Activated CD4-positive, alpha-beta memory T cell treated with anti-CD3 and anti-CD28 coated beads, Interleukin-2, amount 10 ng/mL, durations not matched to agents 7 days and 5 days (primary cell): ENCODE measurements at regions of chr5 and their contacts with region 1.

Region 1: DNA sequence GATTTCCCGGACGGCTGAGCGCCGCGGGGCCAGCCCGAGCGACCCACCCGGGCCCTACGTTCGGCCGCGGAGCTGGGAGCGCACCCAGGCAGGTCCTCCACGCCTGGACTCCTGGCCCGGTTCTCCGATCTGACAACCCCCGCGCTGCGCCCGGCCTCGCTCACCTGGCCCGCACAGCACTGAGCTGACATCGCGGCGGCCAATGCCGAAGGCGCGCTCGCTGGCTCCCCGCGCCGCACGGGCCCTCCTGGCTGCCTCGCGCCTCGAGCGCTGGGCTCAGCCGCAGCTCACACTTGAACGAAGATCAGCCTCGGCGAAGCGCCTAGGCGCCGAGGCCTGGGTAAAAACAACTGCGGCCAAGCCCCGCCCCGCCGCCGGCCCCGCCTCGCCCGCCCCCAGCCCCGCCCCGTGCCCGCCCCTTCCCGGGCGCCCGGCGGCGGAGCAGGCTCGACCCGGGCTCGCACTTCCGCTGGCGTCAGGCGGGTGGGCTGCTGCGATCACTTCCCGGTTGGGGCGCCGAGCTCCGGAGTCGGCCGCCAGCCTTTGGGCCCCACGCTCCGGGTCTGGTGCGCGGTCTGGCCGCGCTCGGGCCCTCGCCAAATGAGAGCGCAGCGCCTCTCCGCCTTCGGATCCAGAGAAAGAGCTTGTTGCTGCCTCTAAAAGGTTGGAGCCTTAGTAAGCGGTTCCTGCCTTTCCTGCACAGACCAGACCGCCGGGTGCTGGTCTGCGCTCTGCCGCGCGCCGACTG is at the start of gene SERINC5:
- DNase-seq: peak; percentile 86
- H3K4me3 Mint-ChIP-seq: peak within 1 kb of the TSS; percentile 93
- H3K27ac Mint-ChIP-seq: peak within 1 kb of the TSS; percentile 91
- H3K4me1 Mint-ChIP-seq: peaks cover 45% of the 10 kb centered on the region
- H3K27me3 Mint-ChIP-seq: no peaks in the 10 kb centered on the region
- total RNA-seq, gene SERINC5: 59.1 to 60.6 TPM

Region 2: GRCh38 chr5:80041527-80041926 is 214.4 kb before region 1 on chr5:
- CTCF ChIA-PET with region 1: no interaction called
- POLR2A ChIA-PET with region 1: no interaction called
- DNase-seq: no peak
- H3K4me3 Mint-ChIP-seq: no peak overlapping the region
- H3K27ac Mint-ChIP-seq: no peak overlapping the region
- H3K4me1 Mint-ChIP-seq: peaks cover 12% of the 10 kb centered on the region
- H3K27me3 Mint-ChIP-seq: peaks cover 32% of the 10 kb centered on the region

Region 3: GRCh38 chr5:80083101-80083890 is 172.6 kb before region 1 on chr5:
- CTCF ChIA-PET with region 1: interaction called, 3 read pairs
- POLR2A ChIA-PET with region 1: interaction called, 10 read pairs
- DNase-seq: peak; percentile 31
- H3K4me3 Mint-ChIP-seq: peak overlapping the region; percentile 56
- H3K27ac Mint-ChIP-seq: peak overlapping the region; percentile 64
- H3K4me1 Mint-ChIP-seq: peaks cover 16% of the 10 kb centered on the region
- H3K27me3 Mint-ChIP-seq: no peaks in the 10 kb centered on the region

Region 4: GRCh38 chr5:80134879-80135278 is 121.0 kb before region 1 on chr5:
- CTCF ChIA-PET with region 1: interaction called, 7 read pairs
- POLR2A ChIA-PET with region 1: interaction called, 52 read pairs
- DNase-seq: no peak
- H3K4me3 Mint-ChIP-seq: no peak overlapping the region
- H3K27ac Mint-ChIP-seq: peak overlapping the region; percentile 95
- H3K4me1 Mint-ChIP-seq: peaks cover 62% of the 10 kb centered on the region
- H3K27me3 Mint-ChIP-seq: no peaks in the 10 kb centered on the region

Region 5: DNA sequence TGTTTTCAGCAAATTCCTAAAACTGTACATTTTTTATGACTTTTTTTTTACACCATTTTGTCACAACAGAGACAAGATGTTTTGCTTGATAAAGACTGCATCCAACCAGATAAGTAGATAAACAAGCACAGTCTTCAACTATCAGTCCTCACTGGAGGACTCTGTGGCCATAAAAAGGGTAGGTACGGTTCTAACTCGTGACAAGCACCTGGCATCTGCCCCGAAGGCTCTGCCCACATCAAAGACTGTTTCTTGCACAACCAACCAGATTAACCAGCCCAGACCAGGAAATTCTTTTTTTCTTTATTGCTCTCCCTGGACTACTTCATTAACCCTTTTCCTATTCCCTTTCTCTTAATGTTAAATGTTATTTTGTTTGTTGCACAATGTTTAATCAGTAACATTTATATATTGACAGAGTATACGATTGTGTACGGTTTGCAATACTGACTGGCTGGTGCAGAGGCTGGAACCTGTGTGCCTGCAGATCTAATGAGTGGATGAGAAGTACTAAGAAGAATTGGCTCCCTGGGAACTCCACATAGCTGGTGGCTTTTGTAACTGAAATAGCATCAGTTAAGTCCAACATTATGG is 74.2 kb before region 1 on chr5:
- CTCF ChIA-PET with region 1: interaction called, 11 read pairs
- POLR2A ChIA-PET with region 1: interaction called, 397 read pairs
- DNase-seq: peak; percentile 62
- H3K4me3 Mint-ChIP-seq: peak overlapping the region; percentile 40
- H3K27ac Mint-ChIP-seq: peak overlapping the region; percentile 89
- H3K4me1 Mint-ChIP-seq: peaks cover 71% of the 10 kb centered on the region
- H3K27me3 Mint-ChIP-seq: no peaks in the 10 kb centered on the region

Region 6: DNA sequence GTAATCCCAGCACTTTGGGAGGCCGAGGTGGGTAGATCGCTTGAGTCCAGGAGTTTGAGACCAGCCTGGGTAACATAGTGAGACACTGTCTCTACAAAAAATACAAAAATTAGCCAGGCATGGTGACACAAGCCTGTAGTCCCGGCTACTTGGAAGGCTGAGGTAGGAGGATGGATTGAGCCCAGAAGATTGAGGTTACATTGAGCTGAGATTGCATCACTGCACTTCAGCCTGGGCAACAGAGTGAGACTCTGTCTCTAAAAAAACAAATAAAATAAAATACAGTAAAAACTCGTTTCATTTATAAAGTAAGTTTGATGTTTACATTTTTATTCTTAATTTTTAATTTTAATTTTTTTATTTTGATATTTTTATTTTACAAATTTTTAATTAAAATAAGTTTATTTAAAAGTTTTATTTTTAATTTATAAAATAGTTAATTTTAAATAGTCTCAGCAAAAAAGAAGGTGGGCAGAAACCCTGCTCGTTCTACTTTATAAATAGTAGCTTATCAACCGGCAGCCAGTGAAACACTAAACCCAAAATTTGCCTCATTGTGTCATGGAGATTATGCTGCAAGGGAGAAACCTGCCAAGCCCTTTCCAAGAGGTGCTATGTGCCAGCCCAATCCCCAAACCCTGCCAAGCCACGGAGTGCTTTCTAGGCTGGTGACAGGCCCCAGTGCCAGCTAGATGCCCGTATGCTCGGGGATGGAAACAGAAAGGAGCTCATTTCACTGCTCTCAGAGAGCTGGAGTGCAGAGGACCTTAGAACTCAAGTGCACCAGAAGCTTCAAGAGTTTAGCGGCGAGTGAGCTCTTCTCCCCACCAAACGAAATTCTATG is 38.9 kb before region 1 on chr5:
- CTCF ChIA-PET with region 1: interaction called, 3 read pairs
- POLR2A ChIA-PET with region 1: interaction called, 84 read pairs
- DNase-seq: peak; percentile 54
- H3K4me3 Mint-ChIP-seq: peak overlapping the region; percentile 69
- H3K27ac Mint-ChIP-seq: peak overlapping the region; percentile 82
- H3K4me1 Mint-ChIP-seq: peaks cover 79% of the 10 kb centered on the region
- H3K27me3 Mint-ChIP-seq: no peaks in the 10 kb centered on the region

Region 7: GRCh38 chr5:80326468-80326867 is 70.6 kb after region 1 on chr5:
- CTCF ChIA-PET with region 1: no interaction called
- POLR2A ChIA-PET with region 1: no interaction called
- DNase-seq: no peak
- H3K4me3 Mint-ChIP-seq: no peak overlapping the region
- H3K27ac Mint-ChIP-seq: no peak overlapping the region
- H3K4me1 Mint-ChIP-seq: no peaks in the 10 kb centered on the region
- H3K27me3 Mint-ChIP-seq: peaks cover 3% of the 10 kb centered on the region

Region 8: GRCh38 chr5:80654391-80655230 is 398.7 kb after region 1 on chr5 and contains the starts of genes DHFR and MSH3:
- CTCF ChIA-PET with region 1: no interaction called
- POLR2A ChIA-PET with region 1: interaction called, 19 read pairs
- DNase-seq: peak; percentile 91
- H3K4me3 Mint-ChIP-seq: peak within 1 kb of the TSS; percentile 90
- H3K27ac Mint-ChIP-seq: peak within 1 kb of the TSS; percentile 97
- H3K4me1 Mint-ChIP-seq: peaks cover 31% of the 10 kb centered on the region
- H3K27me3 Mint-ChIP-seq: no peaks in the 10 kb centered on the region
- total RNA-seq, gene DHFR: 62.6 to 67.2 TPM
- total RNA-seq, gene MSH3: 20.1 to 21.2 TPM